ENCODE measurements at regions of chr2 and their contacts with region 1.

Region 1: GRCh38 chr2:73085691-73086360 is 14.3 kb upstream of the SFXN5 start:
- DNase-seq: peak; percentile 93
- H3K4me3 ChIP-seq: no peak overlapping the region
- H3K27ac ChIP-seq: no peak overlapping the region
- H3K4me1 ChIP-seq: peaks cover 4% of the 10 kb centered on the region
- H3K27me3 ChIP-seq: no peaks in the 10 kb centered on the region
- CTCF ChIP-seq: peak; percentile 44 to 81 (median 66)
- POLR2A ChIP-seq: no peak

Region 2: GRCh38 chr2:72953976-72954375 is 131.8 kb before region 1 on chr2:
- intact Hi-C with region 1: no loop called
- DNase-seq: no peak
- H3K4me3 ChIP-seq: no peak overlapping the region
- H3K27ac ChIP-seq: no peak overlapping the region
- H3K4me1 ChIP-seq: no peaks in the 10 kb centered on the region
- H3K27me3 ChIP-seq: no peaks in the 10 kb centered on the region
- CTCF ChIP-seq: no peak
- POLR2A ChIP-seq: no peak

Region 3: GRCh38 chr2:73163483-73164367 is 77.9 kb after region 1 on chr2:
- intact Hi-C with region 1: loop called (anchors 5 kb)
- DNase-seq: peak; percentile 72
- H3K4me3 ChIP-seq: no peak overlapping the region
- H3K27ac ChIP-seq: no peak overlapping the region
- H3K4me1 ChIP-seq: no peaks in the 10 kb centered on the region
- H3K27me3 ChIP-seq: no peaks in the 10 kb centered on the region
- CTCF ChIP-seq: peak; percentile 59 to 78 (median 77)
- POLR2A ChIP-seq: no peak